ENCODE measurements at regions of chr19 and their contacts with region 1.

Region 1: GRCh38 chr19:49850473-49851342 is at the start of gene PTOV1:
- DNase-seq: peak; percentile 96 to 97 (median 97)
- ATAC-seq: peak; percentile 91
- H3K4me3 ChIP-seq: peak within 1 kb of the TSS; percentile 87
- H3K27ac ChIP-seq: peak within 1 kb of the TSS; percentile 100
- H3K4me1 ChIP-seq: peaks cover 39 to 64% of the 10 kb centered on the region in 2 experiments
- H3K27me3 ChIP-seq: no peaks in the 10 kb centered on the region
- CTCF ChIP-seq: peak in 1 of 3 experiments; percentile 9; a peak in 1 of 6 replicates
- EP300 ChIP-seq: peak; percentile 14; the same call in 1 of the 2 replicates
- POLR2A ChIP-seq: peak; percentile 81
- RAD21 ChIP-seq: no peak
- polyA plus RNA-seq, gene PTOV1: 4.9 to 9.3 TPM

Region 2: DNA sequence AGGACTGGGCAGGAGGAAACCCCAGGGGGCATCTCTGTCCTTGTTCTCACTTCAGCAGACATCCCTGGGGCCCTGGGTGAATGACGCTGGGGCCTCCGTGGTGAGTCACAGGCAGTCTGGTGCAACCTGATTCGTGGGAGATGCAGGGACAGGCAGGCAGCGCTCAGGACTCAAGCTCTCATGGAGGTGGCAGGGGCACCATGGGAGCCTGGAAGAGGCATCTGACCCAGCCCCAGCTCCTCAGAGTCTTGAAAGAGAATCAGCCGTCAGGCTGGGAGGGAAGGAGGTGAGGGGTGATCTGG is 13.7 kb before region 1 on chr19:
- CTCF ChIA-PET with region 1: no interaction called
- POLR2A ChIA-PET with region 1: interaction called, 12 read pairs
- in situ Hi-C with region 1: no loop called
- intact Hi-C with region 1: no loop called
- DNase-seq: no peak
- ATAC-seq: no peak
- H3K4me3 ChIP-seq: no peak overlapping the region
- H3K27ac ChIP-seq: no peak overlapping the region
- H3K4me1 ChIP-seq: peaks cover 0 to 20% of the 10 kb centered on the region in 2 experiments; a peak in 2 of 5 replicates
- H3K27me3 ChIP-seq: no peaks in the 10 kb centered on the region
- CTCF ChIP-seq: no peak
- EP300 ChIP-seq: no peak
- POLR2A ChIP-seq: no peak
- RAD21 ChIP-seq: no peak

Region 3: DNA sequence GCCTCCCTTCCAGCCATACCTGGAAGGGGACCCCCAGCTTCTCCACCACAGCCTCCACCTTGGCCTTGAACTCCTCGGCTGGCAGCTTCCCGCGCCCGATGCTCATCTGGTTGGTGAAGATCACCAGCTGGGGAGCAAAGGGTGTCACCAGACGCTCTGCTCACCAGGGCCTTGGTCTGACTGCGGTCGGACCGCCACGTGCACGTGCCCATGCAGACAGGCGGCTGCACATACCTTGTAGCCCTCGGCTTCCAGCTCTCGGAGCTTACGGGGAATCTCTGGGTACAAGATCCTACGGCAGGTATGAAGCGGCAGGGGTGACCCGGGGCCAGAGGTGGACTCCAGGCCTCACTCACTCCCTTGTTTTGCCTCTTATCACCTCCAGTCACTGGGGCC is 13.2 kb after region 1 on chr19:
- CTCF ChIA-PET with region 1: no interaction called
- POLR2A ChIA-PET with region 1: interaction called, 18 read pairs
- in situ Hi-C with region 1: no loop called
- intact Hi-C with region 1: no loop called
- DNase-seq: no peak
- ATAC-seq: no peak
- H3K4me3 ChIP-seq: no peak overlapping the region
- H3K27ac ChIP-seq: no peak overlapping the region
- H3K4me1 ChIP-seq: peaks cover 28 to 82% of the 10 kb centered on the region in 2 experiments
- H3K27me3 ChIP-seq: no peaks in the 10 kb centered on the region
- CTCF ChIP-seq: no peak
- EP300 ChIP-seq: no peak
- POLR2A ChIP-seq: no peak
- RAD21 ChIP-seq: no peak

Region 4: DNA sequence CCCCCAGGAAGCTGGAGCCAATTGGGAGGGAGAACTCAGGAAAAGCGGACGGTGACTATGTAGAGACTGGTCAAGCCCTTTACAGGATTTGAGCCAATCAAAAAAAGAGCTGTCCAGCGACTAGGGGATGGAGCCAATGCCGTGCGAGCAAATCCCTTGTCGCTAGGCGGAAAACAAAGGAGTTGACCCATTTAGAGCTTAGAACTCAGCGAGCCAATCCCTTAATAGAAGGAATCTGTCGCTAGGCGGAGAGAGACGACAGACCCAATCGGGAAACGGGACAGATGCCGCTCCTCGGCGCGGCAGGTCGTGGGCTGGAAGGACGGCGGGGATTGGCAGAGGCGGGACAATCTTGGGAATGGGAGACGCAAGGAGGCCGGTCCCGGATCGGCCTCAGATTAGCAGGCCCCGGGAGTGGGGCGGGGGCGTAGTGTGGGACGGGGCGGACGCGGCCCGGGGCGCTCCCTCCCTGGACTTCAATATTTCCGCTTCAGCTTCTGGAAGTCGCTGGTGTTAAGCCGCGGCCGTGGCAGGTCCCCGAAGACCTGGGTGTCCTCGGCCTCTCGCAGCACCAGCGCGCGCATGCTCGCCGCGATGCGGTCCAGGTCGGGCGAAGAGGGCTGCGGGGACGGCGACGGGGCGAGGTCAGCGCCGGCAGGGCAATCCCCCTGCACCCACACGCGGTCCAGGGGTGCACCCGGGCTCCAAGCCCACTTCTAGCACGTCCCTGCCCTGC is 18.9 kb after region 1 on chr19:
- CTCF ChIA-PET with region 1: no interaction called
- POLR2A ChIA-PET with region 1: interaction called, 18 read pairs
- in situ Hi-C with region 1: no loop called
- intact Hi-C with region 1: no loop called
- DNase-seq: peak; percentile 82 to 99 (median 89)
- ATAC-seq: peak; percentile 87
- H3K4me3 ChIP-seq: peak overlapping the region; percentile 47
- H3K27ac ChIP-seq: peak overlapping the region; percentile 70
- H3K4me1 ChIP-seq: peaks cover 40 to 84% of the 10 kb centered on the region in 2 experiments
- H3K27me3 ChIP-seq: no peaks in the 10 kb centered on the region
- CTCF ChIP-seq: 0 out of 6 replicates have a peak, but pooled peaks of 1 of the 3 experiments have one; percentile 1
- EP300 ChIP-seq: no peak
- POLR2A ChIP-seq: peak; percentile 60
- RAD21 ChIP-seq: no peak

Region 5: DNA sequence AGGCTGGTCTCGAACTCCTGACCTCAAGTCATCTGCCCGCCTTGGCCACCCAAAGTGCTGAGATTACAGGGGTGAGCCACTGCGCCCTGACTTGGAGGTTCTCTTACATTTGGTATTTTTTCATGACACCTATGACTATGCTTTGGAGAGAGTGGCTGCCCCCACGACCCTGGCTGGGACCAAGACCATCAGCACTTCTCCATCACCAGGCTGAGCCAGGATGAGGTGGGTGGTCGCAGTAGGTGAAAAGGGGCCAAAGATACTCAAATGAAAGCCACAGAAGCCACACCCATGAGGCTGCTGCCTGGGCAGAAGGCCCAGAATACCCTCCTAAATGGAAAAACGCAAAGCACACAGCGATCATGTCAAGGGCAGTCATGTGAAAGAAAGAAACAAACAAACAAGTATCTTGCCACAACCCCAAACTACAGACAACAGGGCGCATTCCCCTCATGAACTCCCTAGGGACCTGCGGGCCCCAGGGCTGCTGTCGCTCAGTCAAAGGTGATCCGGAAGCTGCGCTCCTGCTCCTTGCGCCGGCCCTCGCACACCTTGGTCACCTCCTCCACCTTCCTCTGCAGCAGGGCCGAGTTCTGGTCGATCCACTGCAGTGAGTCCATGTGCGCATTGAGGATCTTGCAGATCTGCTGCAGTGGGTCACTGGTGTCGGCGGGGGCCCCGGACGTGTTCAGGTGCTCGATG is 57.2 kb after region 1 on chr19:
- CTCF ChIA-PET with region 1: no interaction called
- POLR2A ChIA-PET with region 1: no interaction called
- in situ Hi-C with region 1: no loop called
- intact Hi-C with region 1: no loop called
- DNase-seq: no peak
- ATAC-seq: no peak
- H3K4me3 ChIP-seq: no peak overlapping the region
- H3K27ac ChIP-seq: no peak overlapping the region
- H3K4me1 ChIP-seq: peaks cover 0 to 21% of the 10 kb centered on the region in 2 experiments; a peak in 3 of 5 replicates
- H3K27me3 ChIP-seq: no peaks in the 10 kb centered on the region
- CTCF ChIP-seq: no peak
- EP300 ChIP-seq: no peak
- POLR2A ChIP-seq: no peak
- RAD21 ChIP-seq: no peak

Measured in K562 (cell line).